GM12878 (cell line): ENCODE measurements at regions of chr19 and their contacts with region 1.

Region 1: DNA sequence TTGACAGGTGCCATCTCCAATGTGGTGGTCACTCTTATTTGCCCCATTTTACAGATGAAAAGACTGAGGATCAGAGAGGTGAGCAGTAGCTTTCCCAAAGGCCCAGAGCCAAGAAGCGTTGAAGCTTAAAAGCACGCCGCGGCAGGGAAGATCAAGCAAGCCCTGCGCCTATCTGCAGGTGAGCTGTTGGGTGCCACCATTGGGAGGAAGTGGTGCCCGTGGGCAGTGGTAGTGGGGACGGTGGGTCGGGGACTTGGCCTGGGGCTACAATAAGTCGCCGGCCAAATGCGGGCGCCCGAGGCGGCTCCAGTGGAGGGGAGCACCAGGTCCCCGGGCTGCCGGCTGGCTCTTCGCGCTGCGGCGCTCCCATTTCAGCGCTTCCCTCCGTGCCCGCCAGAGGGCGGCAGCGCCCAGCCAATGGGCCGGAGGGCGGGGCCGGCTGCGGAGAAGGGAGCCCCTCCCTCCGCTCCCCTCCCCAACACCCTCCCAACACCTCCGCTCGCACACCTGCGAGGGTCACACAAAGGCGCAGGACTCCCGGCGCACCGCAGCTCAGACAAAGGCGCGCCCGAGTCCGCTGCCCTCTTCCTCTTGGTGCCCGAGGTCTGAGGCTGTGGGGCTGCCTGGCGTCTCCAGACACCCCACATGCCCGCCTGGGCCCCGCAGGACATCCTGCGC is 744 bp upstream of the POU2F2 start:
- DNase-seq: peak; percentile 33
- ATAC-seq: peak; percentile 55
- H3K4me3 ChIP-seq: peak overlapping the region; percentile 99
- H3K27ac ChIP-seq: peak overlapping the region; percentile 99
- H3K4me1 ChIP-seq: peaks cover 27% of the 10 kb centered on the region
- H3K27me3 ChIP-seq: no peaks in the 10 kb centered on the region
- CTCF ChIP-seq: peak; percentile 76 to 99 (median 92); a peak in 5 of 6 replicates
- EP300 ChIP-seq: no peak
- POLR2A ChIP-seq: peak; percentile 61
- RAD21 ChIP-seq: peak; percentile 90

Region 2: DNA sequence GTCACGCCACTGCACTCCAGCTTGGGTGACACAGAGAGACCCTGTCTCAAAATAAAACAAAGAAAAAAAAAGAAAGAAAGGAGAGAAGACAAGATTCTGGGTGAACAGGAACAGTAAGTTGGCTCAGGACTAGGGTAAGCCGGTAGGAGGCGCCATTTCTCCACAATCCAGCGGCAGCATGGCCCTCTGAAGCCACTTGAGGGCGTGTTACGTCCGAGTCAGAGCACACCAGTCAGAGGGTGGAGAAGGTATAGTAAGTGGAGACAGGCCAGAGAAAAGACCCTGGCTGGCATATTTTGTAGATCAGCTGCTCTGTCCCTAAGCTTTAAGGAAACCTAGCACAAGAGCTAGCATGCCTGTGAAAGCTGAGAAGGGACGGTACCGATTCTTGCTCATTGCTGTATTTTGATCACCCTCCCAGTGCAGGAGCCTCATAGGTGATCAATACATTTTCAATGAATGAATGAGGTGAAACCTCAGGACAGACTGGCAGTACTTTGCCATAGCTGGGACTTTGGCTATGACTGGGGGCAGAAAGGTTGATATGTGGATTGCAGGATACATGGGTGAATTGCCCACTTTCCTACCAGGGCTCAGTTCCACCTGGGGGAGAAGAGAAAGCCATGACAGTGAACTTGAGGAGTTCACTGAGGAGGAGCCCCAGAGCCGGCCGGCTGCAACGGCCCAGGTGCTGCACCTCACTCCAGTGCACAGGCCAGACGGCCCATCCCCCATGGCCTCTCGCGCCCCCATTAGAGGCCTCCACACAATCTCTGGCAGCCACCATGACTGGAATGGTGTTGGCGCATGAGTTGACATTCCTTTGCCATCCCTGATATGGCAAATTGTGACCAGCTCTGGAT is 24.2 kb before region 1 on chr19:
- CTCF ChIA-PET with region 1: interaction called, 197 read pairs
- POLR2A ChIA-PET with region 1: interaction called, 67 read pairs
- RAD21 ChIA-PET with region 1: interaction called, 92 read pairs
- SMC1A ChIA-PET with region 1: interaction called, 223 read pairs
- in situ Hi-C with region 1: no loop called
- intact Hi-C with region 1: loop called (anchors 1 kb)
- DNase-seq: peak; percentile 72
- ATAC-seq: peak; percentile 99
- H3K4me3 ChIP-seq: no peak overlapping the region
- H3K27ac ChIP-seq: no peak overlapping the region
- H3K4me1 ChIP-seq: peaks cover 31% of the 10 kb centered on the region
- H3K27me3 ChIP-seq: no peaks in the 10 kb centered on the region
- CTCF ChIP-seq: peak; percentile 100; a peak in 5 of 6 replicates
- EP300 ChIP-seq: no peak; a peak in 1 of 4 replicates
- POLR2A ChIP-seq: no peak
- RAD21 ChIP-seq: peak; percentile 100

Region 3: DNA sequence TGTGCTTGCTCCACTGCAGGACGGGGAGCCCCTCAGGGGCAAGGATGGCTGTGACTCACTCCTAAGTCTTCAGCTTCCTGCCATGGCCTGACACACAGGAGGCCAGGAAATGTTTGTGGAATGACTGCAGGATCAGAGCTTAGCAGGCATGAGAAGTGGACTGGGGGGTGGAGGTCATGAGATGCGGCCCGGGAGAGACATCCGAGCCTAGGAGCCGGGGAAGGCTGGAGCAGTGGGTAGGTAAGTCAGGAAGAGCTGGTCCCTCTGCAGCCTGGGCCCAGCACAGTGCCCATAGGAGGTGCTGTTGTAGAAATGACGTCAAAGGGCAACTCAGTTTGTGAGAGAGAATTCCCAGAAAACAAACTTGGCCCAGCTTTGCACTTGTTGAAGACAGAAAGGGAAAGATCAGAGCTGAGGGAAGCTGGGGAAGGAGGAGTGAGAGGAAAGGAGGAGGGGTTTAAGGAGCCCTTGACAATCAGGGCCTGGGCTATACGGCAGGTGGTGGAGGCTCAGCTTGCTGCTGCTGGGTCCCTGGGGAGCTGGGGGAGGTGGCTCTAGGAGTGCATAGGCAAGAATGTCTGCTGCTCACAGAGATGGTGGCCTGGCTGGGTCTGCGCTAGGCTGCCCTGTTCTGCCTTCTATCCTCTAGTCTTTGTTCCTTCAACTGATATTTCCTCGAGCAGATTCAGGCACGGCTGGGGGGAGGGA is 19.2 kb before region 1 on chr19:
- CTCF ChIA-PET with region 1: interaction called, 197 read pairs
- POLR2A ChIA-PET with region 1: interaction called, 67 read pairs
- RAD21 ChIA-PET with region 1: interaction called, 92 read pairs
- SMC1A ChIA-PET with region 1: interaction called, 223 read pairs
- in situ Hi-C with region 1: no loop called
- intact Hi-C with region 1: loop called (anchors 1 kb)
- DNase-seq: peak; percentile 40
- ATAC-seq: peak; percentile 90
- H3K4me3 ChIP-seq: 0 out of 2 replicates have a peak overlapping the region, but pooled peaks have one; percentile 2
- H3K27ac ChIP-seq: peak overlapping the region; percentile 88
- H3K4me1 ChIP-seq: peaks cover 53% of the 10 kb centered on the region
- H3K27me3 ChIP-seq: no peaks in the 10 kb centered on the region
- CTCF ChIP-seq: peak in 2 of 3 experiments; percentile 8 to 18; a peak in 1 of 6 replicates
- EP300 ChIP-seq: no peak
- POLR2A ChIP-seq: 0 out of 2 replicates have a peak, but pooled peaks have one; percentile 21
- RAD21 ChIP-seq: no peak

Region 4: DNA sequence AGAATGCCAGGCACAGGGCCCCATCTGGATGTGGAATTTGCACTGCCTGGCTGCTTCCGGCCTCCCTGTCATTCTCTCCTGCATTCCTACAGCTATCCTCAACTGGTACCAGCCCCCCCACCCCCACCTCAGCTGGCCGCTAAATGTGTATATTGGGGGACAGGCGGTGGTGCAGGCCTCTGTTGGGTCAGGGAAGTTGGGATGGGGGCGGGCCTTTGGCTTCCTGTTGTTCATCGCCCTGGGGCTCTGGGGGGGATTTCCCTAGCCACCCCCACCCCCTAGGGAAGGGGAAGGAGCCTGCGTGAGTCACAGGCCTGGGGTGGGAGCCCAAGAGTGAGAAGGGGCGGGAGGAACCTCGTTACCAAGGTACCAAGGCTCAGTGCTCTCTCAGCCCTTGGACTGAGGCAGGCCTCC is 11.3 kb before region 1 on chr19:
- CTCF ChIA-PET with region 1: interaction called, 197 read pairs
- POLR2A ChIA-PET with region 1: interaction called, 67 read pairs
- RAD21 ChIA-PET with region 1: interaction called, 92 read pairs
- SMC1A ChIA-PET with region 1: interaction called, 223 read pairs
- in situ Hi-C with region 1: no loop called
- intact Hi-C with region 1: no loop called
- DNase-seq: peak; percentile 52
- ATAC-seq: peak; percentile 75
- H3K4me3 ChIP-seq: peak overlapping the region; percentile 57
- H3K27ac ChIP-seq: peak overlapping the region; percentile 96
- H3K4me1 ChIP-seq: peaks cover 52% of the 10 kb centered on the region
- H3K27me3 ChIP-seq: no peaks in the 10 kb centered on the region
- CTCF ChIP-seq: no peak
- EP300 ChIP-seq: no peak
- POLR2A ChIP-seq: 0 out of 2 replicates have a peak, but pooled peaks have one; percentile 43
- RAD21 ChIP-seq: no peak

Region 5: GRCh38 chr19:42184401-42184861 is 51.4 kb after region 1 on chr19:
- CTCF ChIA-PET with region 1: interaction called, 51 read pairs
- POLR2A ChIA-PET with region 1: interaction called, 4 read pairs
- RAD21 ChIA-PET with region 1: interaction called, 6 read pairs
- SMC1A ChIA-PET with region 1: interaction called, 9 read pairs
- in situ Hi-C with region 1: no loop called
- intact Hi-C with region 1: loop called (anchors 1 kb)
- DNase-seq: no peak
- ATAC-seq: peak; percentile 97
- H3K4me3 ChIP-seq: no peak overlapping the region
- H3K27ac ChIP-seq: no peak overlapping the region
- H3K4me1 ChIP-seq: peaks cover 11% of the 10 kb centered on the region
- H3K27me3 ChIP-seq: no peaks in the 10 kb centered on the region; a peak in 1 of 4 replicates
- CTCF ChIP-seq: peak; percentile 83 to 93 (median 86)
- EP300 ChIP-seq: no peak
- POLR2A ChIP-seq: no peak
- RAD21 ChIP-seq: peak; percentile 88

Region 6: DNA sequence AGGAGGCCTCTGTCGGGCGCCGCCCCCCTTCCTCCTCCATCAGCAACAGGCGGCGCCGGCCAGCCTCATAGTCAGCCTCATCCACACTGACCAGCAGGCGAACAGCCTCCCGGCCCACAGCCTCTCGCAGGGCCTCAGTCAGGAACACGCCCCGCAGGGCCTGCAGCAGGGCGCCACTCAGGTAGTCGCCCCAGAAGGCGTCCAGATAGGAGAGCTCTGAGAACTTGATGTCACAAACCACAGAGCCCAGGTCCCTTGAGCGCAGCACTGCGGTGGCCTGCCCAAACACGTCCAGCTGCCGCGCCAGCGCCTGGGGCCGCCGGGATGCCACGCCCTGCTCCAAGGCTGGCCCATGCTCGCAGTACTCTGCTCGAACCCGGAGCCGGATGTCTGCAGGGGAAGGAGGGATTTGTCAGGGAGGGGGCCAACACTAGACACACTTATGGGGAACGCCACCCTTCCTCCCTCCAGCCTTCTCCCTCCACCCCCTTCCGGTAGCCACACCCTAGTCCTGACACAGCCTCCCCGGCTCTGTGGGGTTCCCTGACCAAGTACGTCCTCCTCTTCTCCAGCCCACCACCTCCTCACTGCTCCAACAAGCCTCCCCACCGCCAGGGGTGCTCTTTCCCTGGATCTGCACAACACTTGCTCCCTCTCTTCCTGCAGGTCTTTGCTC is 66.6 kb after region 1 on chr19:
- CTCF ChIA-PET with region 1: interaction called, 8 read pairs
- POLR2A ChIA-PET with region 1: interaction called, 5 read pairs
- RAD21 ChIA-PET with region 1: interaction called, 20 read pairs
- SMC1A ChIA-PET with region 1: interaction called, 3 read pairs
- in situ Hi-C with region 1: no loop called
- intact Hi-C with region 1: loop called (anchors 5 kb)
- DNase-seq: peak; percentile 68
- ATAC-seq: peak; percentile 77
- H3K4me3 ChIP-seq: peak overlapping the region; percentile 41
- H3K27ac ChIP-seq: peak overlapping the region; percentile 95
- H3K4me1 ChIP-seq: peaks cover 59% of the 10 kb centered on the region
- H3K27me3 ChIP-seq: no peaks in the 10 kb centered on the region
- CTCF ChIP-seq: peak; percentile 55 to 67 (median 61)
- EP300 ChIP-seq: no peak
- POLR2A ChIP-seq: peak; percentile 74
- RAD21 ChIP-seq: peak; percentile 40

Region 7: DNA sequence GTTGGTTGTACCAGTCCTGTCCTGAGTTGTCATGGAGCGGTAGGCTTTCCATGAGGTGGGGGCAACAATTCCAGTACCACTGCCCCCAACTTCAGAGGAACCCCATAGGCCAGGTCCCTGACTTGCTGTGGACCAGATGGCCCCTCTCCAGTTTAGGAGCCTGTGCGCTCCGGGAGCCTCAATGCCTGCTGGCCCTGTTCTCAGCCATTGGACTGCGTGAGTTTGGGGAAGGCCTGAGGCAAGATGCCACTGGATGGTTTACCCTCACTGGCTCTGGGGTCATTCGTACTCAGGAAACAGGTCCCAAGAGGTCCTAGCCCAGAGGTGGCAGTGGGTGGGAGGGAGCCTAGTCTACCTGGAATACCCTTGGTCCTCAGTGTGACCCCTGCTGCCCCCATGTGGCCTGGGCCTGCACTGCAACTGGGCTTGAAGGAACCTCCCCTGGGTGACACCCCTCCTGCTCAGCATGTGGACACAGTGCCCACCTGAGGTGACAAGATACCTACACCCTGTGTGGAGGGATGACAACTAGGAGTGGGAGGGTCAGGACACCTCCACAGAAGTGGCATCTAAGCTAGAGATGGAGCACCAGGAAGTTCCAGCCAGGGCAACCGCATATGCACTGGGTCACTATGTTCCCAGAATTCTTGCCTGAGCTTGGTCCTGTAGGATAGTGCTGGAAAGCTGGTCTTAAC is 163.0 kb after region 1 on chr19:
- CTCF ChIA-PET with region 1: interaction called, 10 read pairs
- POLR2A ChIA-PET with region 1: interaction called, 3 read pairs
- RAD21 ChIA-PET with region 1: interaction called, 3 read pairs
- SMC1A ChIA-PET with region 1: no interaction called
- in situ Hi-C with region 1: no loop called
- intact Hi-C with region 1: loop called (anchors 5 kb)
- DNase-seq: peak; percentile 41
- ATAC-seq: peak; percentile 96
- H3K4me3 ChIP-seq: no peak overlapping the region
- H3K27ac ChIP-seq: no peak overlapping the region
- H3K4me1 ChIP-seq: no peaks in the 10 kb centered on the region; the same call in 1 of the 2 replicates
- H3K27me3 ChIP-seq: no peaks in the 10 kb centered on the region
- CTCF ChIP-seq: peak; percentile 97 to 99 (median 99)
- EP300 ChIP-seq: no peak
- POLR2A ChIP-seq: peak; percentile 71
- RAD21 ChIP-seq: peak; percentile 74

Region 8: DNA sequence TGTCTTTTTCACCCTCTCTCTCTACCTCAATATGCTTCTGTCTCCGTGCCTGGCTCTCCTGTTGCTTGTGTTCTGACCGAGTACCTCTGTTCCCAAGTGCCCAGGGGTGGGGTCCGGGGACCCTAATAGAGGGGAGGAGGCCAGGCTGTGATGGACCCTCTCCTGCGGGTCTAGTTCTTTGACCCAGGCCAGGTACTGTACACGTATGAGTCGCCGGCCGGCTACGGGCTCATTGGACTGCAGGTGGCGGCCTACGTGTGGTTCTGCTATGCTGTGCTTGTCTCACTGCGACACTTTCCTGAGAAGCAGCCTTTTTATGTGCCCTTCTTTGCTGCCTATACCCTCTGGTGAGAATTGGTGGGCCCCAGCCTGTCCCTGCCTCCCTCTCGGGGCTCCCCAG is 184.5 kb after region 1 on chr19:
- CTCF ChIA-PET with region 1: no interaction called
- POLR2A ChIA-PET with region 1: no interaction called
- RAD21 ChIA-PET with region 1: no interaction called
- SMC1A ChIA-PET with region 1: no interaction called
- in situ Hi-C with region 1: no loop called
- intact Hi-C with region 1: no loop called
- DNase-seq: no peak
- ATAC-seq: no peak
- H3K4me3 ChIP-seq: no peak overlapping the region
- H3K27ac ChIP-seq: no peak overlapping the region
- H3K4me1 ChIP-seq: peaks cover 9% of the 10 kb centered on the region
- H3K27me3 ChIP-seq: peaks cover 4 to 5% of the 10 kb centered on the region in 2 experiments; a peak in 3 of 4 replicates
- CTCF ChIP-seq: no peak
- EP300 ChIP-seq: no peak
- POLR2A ChIP-seq: no peak
- RAD21 ChIP-seq: no peak